MCF 10A (cell line): ENCODE measurements at regions of chr6 and their contacts with region 1.

Region 1: DNA sequence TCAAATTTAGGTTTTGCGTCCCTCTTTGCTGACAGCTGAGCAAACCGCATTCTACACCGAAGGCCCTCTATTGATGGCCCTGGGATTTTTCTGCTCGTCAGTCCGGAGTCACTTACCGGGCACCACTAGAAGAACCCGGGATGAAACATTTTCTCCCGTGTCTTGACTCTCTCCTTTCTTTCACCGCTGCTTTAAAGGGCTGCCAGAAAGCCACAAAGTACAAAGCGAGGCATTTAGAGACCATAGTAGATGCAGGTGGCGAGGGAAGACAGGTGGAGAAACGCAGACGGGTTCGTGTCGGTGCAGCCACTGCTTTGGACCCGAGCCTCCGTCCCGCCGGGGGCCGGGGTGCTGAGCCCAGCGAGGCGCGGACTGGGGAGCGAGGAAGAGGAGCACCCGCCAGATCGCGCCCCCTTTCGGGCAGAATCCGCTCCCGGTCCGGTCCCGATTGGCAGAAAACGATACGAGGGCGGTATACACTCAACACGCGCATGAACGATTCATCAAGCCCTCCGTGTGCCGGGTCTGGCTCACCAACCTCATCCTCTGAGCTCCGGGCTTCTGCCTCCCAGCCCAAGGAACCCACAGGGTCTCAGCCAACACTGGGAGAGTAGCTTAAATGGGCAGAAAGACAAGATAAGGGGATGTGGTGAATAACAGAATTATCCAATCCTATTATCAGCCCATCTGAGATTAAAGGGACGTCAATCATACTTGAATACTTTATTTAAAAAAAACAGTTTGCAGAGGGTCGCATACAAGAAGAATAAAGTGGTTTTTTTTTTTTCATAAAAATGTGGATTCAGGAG is 84.9 kb downstream of the TRIM27 start:
- DNase-seq: peak; percentile 88
- H3K4me3 Mint-ChIP-seq: peak overlapping the region; percentile 92
- H3K27ac Mint-ChIP-seq: peak overlapping the region; percentile 46
- H3K4me1 Mint-ChIP-seq: peaks cover 6% of the 10 kb centered on the region
- H3K27me3 Mint-ChIP-seq: no peaks in the 10 kb centered on the region
- CTCF ChIP-seq: peak; percentile 62

Region 2: GRCh38 chr6:28586962-28587745 is 251.7 kb before region 1 on chr6:
- CTCF ChIA-PET with region 1: no interaction called
- POLR2A ChIA-PET with region 1: interaction called, 11 read pairs
- intact Hi-C with region 1: no loop called
- DNase-seq: peak; percentile 79
- H3K4me3 Mint-ChIP-seq: peak overlapping the region; percentile 95
- H3K27ac Mint-ChIP-seq: peak overlapping the region; percentile 92
- H3K4me1 Mint-ChIP-seq: peaks cover 30% of the 10 kb centered on the region
- H3K27me3 Mint-ChIP-seq: no peaks in the 10 kb centered on the region
- CTCF ChIP-seq: no peak

Region 3: DNA sequence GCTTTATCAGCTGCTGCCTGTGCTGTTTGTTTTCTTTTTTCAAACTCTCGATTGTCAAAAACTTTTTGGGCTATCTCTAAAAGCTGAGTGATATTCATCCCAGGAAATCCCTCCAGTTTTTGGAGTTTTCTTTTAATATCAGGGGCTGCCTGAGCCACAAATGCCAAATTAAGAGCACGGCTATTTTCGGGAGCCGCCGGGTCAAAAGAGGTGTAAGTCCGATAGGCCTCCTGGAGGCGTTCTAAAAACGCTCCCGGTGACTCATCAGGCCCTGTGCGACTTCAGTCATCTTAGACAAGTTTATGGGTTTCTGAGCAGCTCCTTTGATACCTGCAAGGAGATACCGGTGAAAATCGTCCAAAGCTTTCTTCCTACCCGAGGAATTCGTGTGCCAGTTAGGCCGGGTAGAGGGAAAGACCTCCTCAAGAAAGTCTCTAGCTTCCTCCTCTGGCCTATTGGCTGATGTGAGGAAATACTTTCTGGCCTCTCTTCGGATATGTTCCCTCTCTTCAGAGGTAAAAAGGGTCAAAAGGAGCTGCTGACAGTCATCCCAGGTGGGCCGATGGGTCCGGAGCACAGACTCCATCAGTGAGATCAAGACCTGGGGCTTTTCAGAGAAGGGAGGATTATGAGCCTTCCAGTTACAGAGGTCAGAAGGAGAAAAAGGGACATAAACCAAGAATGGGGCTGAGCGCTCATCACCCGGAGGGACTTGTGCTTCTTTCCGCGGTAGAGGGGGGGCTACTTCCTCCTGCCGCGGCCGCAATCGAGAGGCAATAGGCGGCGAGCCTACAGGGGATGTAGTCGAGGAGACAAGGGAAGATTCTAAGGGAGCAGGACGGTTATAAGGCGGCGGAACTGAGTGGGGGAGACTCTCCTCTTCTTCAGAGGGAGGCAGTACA is 66.1 kb before region 1 on chr6:
- CTCF ChIA-PET with region 1: no interaction called
- POLR2A ChIA-PET with region 1: no interaction called
- intact Hi-C with region 1: no loop called
- DNase-seq: peak; percentile 59
- H3K4me3 Mint-ChIP-seq: no peak overlapping the region
- H3K27ac Mint-ChIP-seq: no peak overlapping the region
- H3K4me1 Mint-ChIP-seq: peaks cover 15% of the 10 kb centered on the region
- H3K27me3 Mint-ChIP-seq: peaks cover 11% of the 10 kb centered on the region
- CTCF ChIP-seq: no peak

Region 4: GRCh38 chr6:28816909-28817807 is 21.7 kb before region 1 on chr6:
- CTCF ChIA-PET with region 1: interaction called, 9 read pairs
- POLR2A ChIA-PET with region 1: interaction called, 12 read pairs
- intact Hi-C with region 1: no loop called
- DNase-seq: peak; percentile 76
- H3K4me3 Mint-ChIP-seq: peak overlapping the region; percentile 72
- H3K27ac Mint-ChIP-seq: peak overlapping the region; percentile 31
- H3K4me1 Mint-ChIP-seq: peaks cover 24% of the 10 kb centered on the region
- H3K27me3 Mint-ChIP-seq: peaks cover 14% of the 10 kb centered on the region
- CTCF ChIP-seq: no peak

Region 5: GRCh38 chr6:28895134-28895812 is 56.4 kb after region 1 on chr6:
- CTCF ChIA-PET with region 1: interaction called, 9 read pairs
- POLR2A ChIA-PET with region 1: interaction called, 66 read pairs
- intact Hi-C with region 1: loop called (anchors 1 kb)
- DNase-seq: peak; percentile 96
- H3K4me3 Mint-ChIP-seq: peak overlapping the region; percentile 90
- H3K27ac Mint-ChIP-seq: peak overlapping the region; percentile 100
- H3K4me1 Mint-ChIP-seq: no peaks in the 10 kb centered on the region
- H3K27me3 Mint-ChIP-seq: no peaks in the 10 kb centered on the region
- CTCF ChIP-seq: no peak

Region 6: GRCh38 chr6:28981833-28982475 is 143.1 kb after region 1 on chr6:
- CTCF ChIA-PET with region 1: interaction called, 14 read pairs
- POLR2A ChIA-PET with region 1: interaction called, 47 read pairs
- intact Hi-C with region 1: loop called (anchors 1 kb)
- DNase-seq: peak; percentile 93
- H3K4me3 Mint-ChIP-seq: peak overlapping the region; percentile 75
- H3K27ac Mint-ChIP-seq: peak overlapping the region; percentile 91
- H3K4me1 Mint-ChIP-seq: peaks cover 37% of the 10 kb centered on the region
- H3K27me3 Mint-ChIP-seq: no peaks in the 10 kb centered on the region
- CTCF ChIP-seq: no peak

Region 7: GRCh38 chr6:29092957-29093356 is 254.1 kb after region 1 on chr6:
- CTCF ChIA-PET with region 1: no interaction called
- POLR2A ChIA-PET with region 1: no interaction called
- intact Hi-C with region 1: no loop called
- DNase-seq: no peak
- H3K4me3 Mint-ChIP-seq: no peak overlapping the region
- H3K27ac Mint-ChIP-seq: no peak overlapping the region
- H3K4me1 Mint-ChIP-seq: no peaks in the 10 kb centered on the region
- H3K27me3 Mint-ChIP-seq: peaks cover 63% of the 10 kb centered on the region
- CTCF ChIP-seq: no peak

Region 8: DNA sequence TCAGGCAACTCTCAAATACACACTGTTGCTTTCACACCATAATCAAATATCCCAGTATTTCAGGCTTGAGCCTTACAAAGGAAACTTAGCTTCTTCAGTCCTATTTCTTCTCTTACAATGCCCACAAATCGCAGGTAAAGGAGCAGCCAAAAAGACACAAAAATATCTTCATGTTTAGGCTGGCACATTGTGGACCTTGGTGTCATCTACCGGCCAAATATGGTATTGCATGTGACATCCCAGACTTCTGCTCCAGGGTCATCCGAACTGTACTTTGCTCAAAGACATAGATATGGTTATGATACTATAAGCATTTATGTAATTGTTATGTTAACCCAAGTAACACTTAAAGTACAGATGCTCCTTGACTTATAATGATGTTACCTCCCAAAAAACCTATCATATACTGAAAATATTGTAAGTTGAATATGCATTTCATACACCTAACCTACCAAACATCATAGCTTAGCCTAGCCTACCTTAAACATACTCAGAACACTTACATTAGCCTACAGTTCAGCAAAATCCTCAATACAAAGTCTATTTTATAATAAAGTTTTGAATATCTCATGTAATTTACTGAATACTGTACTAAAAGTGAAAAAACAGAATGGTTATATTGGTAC is 750.7 kb after region 1 on chr6:
- CTCF ChIA-PET with region 1: interaction called, 4 read pairs
- POLR2A ChIA-PET with region 1: interaction called, 4 read pairs
- intact Hi-C with region 1: loop called (anchors 5 kb)
- DNase-seq: peak; percentile 65
- H3K4me3 Mint-ChIP-seq: no peak overlapping the region
- H3K27ac Mint-ChIP-seq: no peak overlapping the region
- H3K4me1 Mint-ChIP-seq: no peaks in the 10 kb centered on the region
- H3K27me3 Mint-ChIP-seq: peaks cover 68% of the 10 kb centered on the region
- CTCF ChIP-seq: peak; percentile 92

Region 9: GRCh38 chr6:29737707-29738630 is 899.1 kb after region 1 on chr6:
- CTCF ChIA-PET with region 1: no interaction called
- POLR2A ChIA-PET with region 1: no interaction called
- intact Hi-C with region 1: no loop called
- DNase-seq: peak; percentile 84
- H3K4me3 Mint-ChIP-seq: no peak overlapping the region
- H3K27ac Mint-ChIP-seq: no peak overlapping the region
- H3K4me1 Mint-ChIP-seq: peaks cover 18% of the 10 kb centered on the region
- H3K27me3 Mint-ChIP-seq: no peaks in the 10 kb centered on the region
- CTCF ChIP-seq: peak; percentile 84